Gastrocnemius medialis (tissue), 4 donors: ENCODE measurements at regions of chr9 and their contacts with region 1.

Region 1: DNA sequence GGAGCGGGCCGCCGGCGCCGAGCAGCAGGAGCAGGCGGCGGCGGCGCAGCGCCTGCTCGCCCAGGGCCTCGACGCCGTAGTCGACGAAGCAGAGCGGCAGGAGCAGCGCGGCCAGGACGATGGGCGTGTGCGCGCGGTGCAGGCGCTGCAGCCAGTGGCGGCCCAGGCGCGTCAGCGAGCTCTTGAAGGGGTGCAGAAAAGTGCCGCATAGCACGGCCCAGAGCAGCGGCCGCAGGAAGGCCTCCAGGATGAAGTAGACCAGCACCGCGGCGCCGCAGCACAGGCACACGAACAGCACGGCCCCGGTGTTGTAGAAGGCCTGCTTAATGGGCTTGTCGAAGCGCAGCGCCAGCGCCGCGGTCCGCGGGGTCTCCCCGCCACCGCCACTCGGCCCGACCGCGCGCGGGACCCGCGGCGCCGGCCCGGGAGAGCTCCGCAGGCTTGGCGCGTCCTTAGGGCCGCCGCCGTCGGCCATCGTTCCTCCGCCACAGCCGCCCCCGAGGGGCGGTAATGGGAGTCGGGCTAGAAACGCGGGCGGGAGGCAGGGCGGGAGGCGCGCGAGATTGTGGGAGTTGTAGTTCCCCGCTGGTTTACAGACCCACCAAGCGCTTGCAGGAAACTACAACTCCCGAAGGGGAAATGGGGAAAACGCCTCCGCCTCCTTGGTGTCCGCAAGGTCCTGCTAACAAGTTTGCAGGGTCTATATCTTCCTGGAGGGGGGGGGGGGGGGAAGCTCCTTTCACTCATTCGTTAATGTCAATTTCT is at the start of gene TMEM245:
- DNase-seq: peak; percentile 98
- ATAC-seq: peak; percentile 92 to 94
- H3K4me3 ChIP-seq: peak within 1 kb of the TSS; percentile 73 to 97 (median 86)
- H3K27ac ChIP-seq: peak within 1 kb of the TSS; percentile 76 to 98 (median 88)
- H3K4me1 ChIP-seq: peaks cover 38 to 46% of the 10 kb centered on the region in 2 donors
- H3K27me3 ChIP-seq: no peaks in the 10 kb centered on the region
- CTCF ChIP-seq: peak in 1 of 5 experiments; percentile 5
- POLR2A ChIP-seq: peak; percentile 96 to 98
- total RNA-seq, gene TMEM245: 45.7 to 121 (median 71.4) TPM

Region 2: GRCh38 chr9:107282753-107283625 is 1836.6 kb before region 1 on chr9 and contains the start of gene RAD23B:
- in situ Hi-C with region 1: loop called in 1 of 4 experiments (anchors 25 kb)
- intact Hi-C with region 1: no loop called
- DNase-seq: peak; percentile 97 to 98
- ATAC-seq: peak; percentile 78 to 79
- H3K4me3 ChIP-seq: peak within 1 kb of the TSS; percentile 73 to 91 (median 86)
- H3K27ac ChIP-seq: peak within 1 kb of the TSS; percentile 90 to 99 (median 97)
- H3K4me1 ChIP-seq: peaks cover 30 to 33% of the 10 kb centered on the region in 2 donors
- H3K27me3 ChIP-seq: no peaks in the 10 kb centered on the region
- CTCF ChIP-seq: peak in 2 of 5 experiments; percentile 3 to 25
- POLR2A ChIP-seq: peak; percentile 97 to 98
- total RNA-seq, gene RAD23B: 163 to 249 (median 188) TPM

Region 3: GRCh38 chr9:107732781-107733522 is 1386.7 kb before region 1 on chr9:
- in situ Hi-C with region 1: no loop called
- intact Hi-C with region 1: loop called (anchors 10 kb)
- DNase-seq: peak; percentile 54 to 75
- ATAC-seq: peak; percentile 79 to 82
- H3K4me3 ChIP-seq: peak overlapping the region; percentile 32 to 42 (median 36)
- H3K27ac ChIP-seq: peak overlapping the region; percentile 78 to 88 (median 86)
- H3K4me1 ChIP-seq: peaks cover 17 to 19% of the 10 kb centered on the region in 2 donors
- H3K27me3 ChIP-seq: no peaks in the 10 kb centered on the region
- CTCF ChIP-seq: no peak
- POLR2A ChIP-seq: no peak

Region 4: GRCh38 chr9:108933718-108934322 is 185.8 kb before region 1 on chr9 and contains the start of gene ELP1:
- in situ Hi-C with region 1: no loop called
- intact Hi-C with region 1: loop called (anchors 5 kb)
- DNase-seq: peak; percentile 79 to 83
- ATAC-seq: peak; percentile 85 to 90
- H3K4me3 ChIP-seq: peak within 1 kb of the TSS; percentile 86 to 97 (median 91)
- H3K27ac ChIP-seq: peak within 1 kb of the TSS; percentile 84 to 94 (median 88)
- H3K4me1 ChIP-seq: peaks cover 16 to 24% of the 10 kb centered on the region in 2 donors
- H3K27me3 ChIP-seq: no peaks in the 10 kb centered on the region
- CTCF ChIP-seq: peak in 2 of 5 experiments; percentile 11 to 21
- POLR2A ChIP-seq: peak in 1 of 2 donors; percentile 24
- total RNA-seq, gene ELP1: 9.4 to 24.3 (median 13.5) TPM

Region 5: GRCh38 chr9:109012876-109013678 is 106.5 kb before region 1 on chr9 and contains the start of gene CTNNAL1:
- in situ Hi-C with region 1: loop called in 1 of 4 experiments (anchors 10 kb)
- intact Hi-C with region 1: loop called (anchors 2 kb)
- DNase-seq: peak; percentile 89 to 92
- ATAC-seq: peak; percentile 79 to 80
- H3K4me3 ChIP-seq: peak within 1 kb of the TSS; percentile 78 to 96 (median 89)
- H3K27ac ChIP-seq: peak within 1 kb of the TSS; percentile 92 to 96 (median 93)
- H3K4me1 ChIP-seq: peaks cover 39 to 42% of the 10 kb centered on the region in 2 donors
- H3K27me3 ChIP-seq: no peaks in the 10 kb centered on the region
- CTCF ChIP-seq: peak in 1 of 5 experiments; percentile 5
- POLR2A ChIP-seq: peak; percentile 93 to 95
- total RNA-seq, gene CTNNAL1: 17.8 to 75.4 (median 44.8) TPM

Region 6: DNA sequence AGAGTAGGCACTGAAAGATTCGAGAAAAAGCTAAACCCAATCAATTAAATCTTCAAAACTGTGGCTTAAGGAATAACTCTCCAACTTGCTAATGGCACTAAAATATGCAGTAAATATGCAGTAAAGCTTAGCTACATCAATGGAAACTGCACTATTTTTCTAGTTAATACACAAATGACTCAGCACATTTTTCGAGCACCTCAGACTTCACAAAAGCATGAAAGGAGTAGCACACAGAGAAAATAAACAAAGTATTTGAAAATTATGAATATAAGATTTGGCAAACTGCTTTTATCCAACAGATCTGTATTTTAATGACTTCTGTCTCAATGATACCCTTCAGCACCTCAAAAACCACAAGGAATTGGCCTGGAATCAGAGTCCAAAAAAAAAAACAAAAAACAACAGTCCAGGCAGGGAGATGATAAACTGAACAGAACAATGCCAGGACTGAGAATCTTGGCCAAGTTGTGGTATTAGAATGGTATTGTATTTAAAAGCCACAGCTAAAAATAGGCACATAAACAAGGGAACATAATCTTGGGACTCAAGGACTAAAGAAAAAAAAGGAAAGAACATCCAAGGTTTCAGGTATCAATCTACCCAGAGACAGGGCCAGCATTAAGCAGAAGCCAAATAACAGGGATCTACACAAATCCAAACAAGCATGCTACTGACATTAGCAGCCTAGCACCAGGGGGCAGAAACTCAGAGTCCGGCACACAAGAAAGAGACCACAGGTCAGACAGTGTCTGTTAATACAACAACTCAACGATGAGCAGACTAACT is 21.3 kb before region 1 on chr9:
- in situ Hi-C with region 1: no loop called
- intact Hi-C with region 1: loop called (anchors 2 kb)
- DNase-seq: peak; percentile 58 to 78
- ATAC-seq: peak; percentile 90 to 92
- H3K4me3 ChIP-seq: peak overlapping the region; percentile 8 to 21 (median 11)
- H3K27ac ChIP-seq: peak overlapping the region; percentile 83 to 86 (median 84)
- H3K4me1 ChIP-seq: peaks cover 88 to 93% of the 10 kb centered on the region in 2 donors
- H3K27me3 ChIP-seq: no peaks in the 10 kb centered on the region
- CTCF ChIP-seq: peak in 4 of 5 experiments; percentile 20 to 58 (median 44)
- POLR2A ChIP-seq: peak in 1 of 2 donors; percentile 32

Region 7: GRCh38 chr9:109422641-109423040 is 303.0 kb after region 1 on chr9:
- in situ Hi-C with region 1: no loop called
- intact Hi-C with region 1: loop called (anchors 5 kb)
- DNase-seq: no peak
- ATAC-seq: no peak
- H3K4me3 ChIP-seq: no peak overlapping the region
- H3K27ac ChIP-seq: peak overlapping the region; percentile 90 to 95 (median 92)
- H3K4me1 ChIP-seq: peaks cover 34 to 52% of the 10 kb centered on the region in 2 donors
- H3K27me3 ChIP-seq: no peaks in the 10 kb centered on the region
- CTCF ChIP-seq: no peak
- POLR2A ChIP-seq: no peak